Psoas muscle (tissue), 8 donors: ENCODE measurements at regions of chr11 and their contacts with region 1.

Region 1: DNA sequence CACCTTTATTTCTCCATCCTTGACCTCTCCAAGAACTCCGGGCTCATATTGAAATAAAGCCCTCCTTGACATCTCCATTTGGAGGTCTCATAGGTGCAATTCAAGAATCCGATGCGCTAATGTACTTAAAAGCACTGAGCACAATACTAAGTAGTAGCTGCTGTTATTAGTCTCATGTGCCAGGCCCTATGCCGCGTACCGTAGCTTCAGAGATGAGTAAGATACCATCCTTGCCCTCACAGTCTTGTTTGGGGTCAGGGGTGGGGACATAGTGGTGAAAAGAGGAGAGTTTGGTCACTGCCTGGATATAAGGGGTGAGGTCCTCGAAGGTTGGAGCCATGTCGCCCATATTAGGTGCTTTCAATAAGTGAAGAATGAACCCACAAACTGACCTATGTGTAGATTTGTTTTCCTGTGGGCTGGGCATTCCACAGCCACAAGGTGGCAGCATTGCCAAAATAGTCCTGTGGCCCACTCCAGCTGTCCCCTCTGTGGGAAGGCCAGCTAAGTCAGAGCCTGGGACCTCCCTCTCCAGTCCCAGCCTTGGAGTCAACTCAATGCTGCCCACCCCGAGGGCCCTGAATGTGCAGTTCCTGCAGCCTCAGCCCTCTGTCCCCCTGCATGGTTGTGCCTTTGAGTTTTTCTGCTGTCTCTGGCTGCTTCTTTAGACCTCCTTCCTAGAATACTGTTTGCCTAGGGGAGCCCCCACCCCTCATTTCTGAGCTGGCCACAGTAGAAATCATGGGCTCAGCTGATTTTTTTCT is 6.5 kb downstream of the DCPS start:
- DNase-seq: peak; percentile 77 to 85
- ATAC-seq: peak; percentile 84 to 90 (median 85)
- H3K4me3 ChIP-seq: no peak overlapping the region
- H3K27ac ChIP-seq: peak overlapping the region; percentile 83
- H3K4me1 ChIP-seq: peaks cover 28% of the 10 kb centered on the region
- H3K27me3 ChIP-seq: no peaks in the 10 kb centered on the region
- CTCF ChIP-seq: peak; percentile 91

Region 2: DNA sequence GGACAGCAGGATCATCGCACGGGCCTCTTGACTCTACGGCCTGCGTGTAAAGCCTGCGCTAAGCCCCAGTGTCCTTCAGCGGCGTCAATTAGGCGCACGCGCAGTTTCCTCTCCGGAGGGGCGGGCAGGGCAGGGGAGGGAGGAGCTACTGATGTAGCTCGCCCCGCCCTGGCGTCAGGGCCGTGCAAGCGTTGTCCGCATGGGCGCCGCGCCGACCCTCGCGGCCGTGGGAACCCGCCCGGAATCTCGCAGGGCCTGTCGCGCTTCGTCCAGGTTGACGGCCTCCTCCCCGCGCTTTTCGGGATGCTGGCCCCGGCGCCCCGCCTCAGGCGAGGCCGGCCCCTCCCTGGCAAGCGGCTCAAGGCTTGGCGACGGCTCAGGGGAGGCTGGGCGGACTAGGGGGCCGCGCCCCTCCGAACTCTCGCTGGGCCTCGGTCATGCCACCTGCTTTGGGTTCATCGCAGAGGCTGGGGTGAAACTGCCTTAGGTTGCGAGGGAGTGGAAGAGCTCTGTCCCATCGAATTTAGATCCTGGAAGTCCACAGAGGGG is 106.2 kb after region 1 on chr11:
- intact Hi-C with region 1: loop called in 1 of 2 experiments (anchors 5 kb)
- DNase-seq: peak; percentile 91 to 95
- ATAC-seq: peak; percentile 93 to 98 (median 95)
- H3K4me3 ChIP-seq: peak overlapping the region; percentile 74
- H3K27ac ChIP-seq: peak overlapping the region; percentile 71
- H3K4me1 ChIP-seq: no peaks in the 10 kb centered on the region
- H3K27me3 ChIP-seq: no peaks in the 10 kb centered on the region
- CTCF ChIP-seq: no peak

Region 3: GRCh38 chr11:126480410-126481302 is 170.2 kb after region 1 on chr11:
- intact Hi-C with region 1: loop called (anchors 2 kb)
- DNase-seq: peak; percentile 79 to 86
- ATAC-seq: peak; percentile 86 to 91 (median 90)
- H3K4me3 ChIP-seq: peak overlapping the region; percentile 31
- H3K27ac ChIP-seq: peak overlapping the region; percentile 50
- H3K4me1 ChIP-seq: no peaks in the 10 kb centered on the region
- H3K27me3 ChIP-seq: no peaks in the 10 kb centered on the region
- CTCF ChIP-seq: peak; percentile 94